Heart right ventricle (tissue), 16 donors: ENCODE measurements at regions of chr18 and their contacts with region 1.

Region 1: GRCh38 chr18:74196220-74197119 is 48.1 kb downstream of the TIMM21 start:
- DNase-seq: peak in 1 of 2 donors; percentile 25
- ATAC-seq: peak in 6 of 8 donors; percentile 58 to 79 (median 74)
- H3K4me3 ChIP-seq: peak overlapping the region in 5 of 10 donors; percentile 16 to 28 (median 24)
- H3K27ac ChIP-seq: no peak overlapping the region
- H3K4me1 ChIP-seq: peaks cover 0 to 4% (median 2%) of the 10 kb centered on the region in 9 donors
- H3K27me3 ChIP-seq: peaks cover 0 to 29% (median 8%) of the 10 kb centered on the region in 7 donors
- CTCF ChIP-seq: peak; percentile 80 to 95 (median 89)

Region 2: DNA sequence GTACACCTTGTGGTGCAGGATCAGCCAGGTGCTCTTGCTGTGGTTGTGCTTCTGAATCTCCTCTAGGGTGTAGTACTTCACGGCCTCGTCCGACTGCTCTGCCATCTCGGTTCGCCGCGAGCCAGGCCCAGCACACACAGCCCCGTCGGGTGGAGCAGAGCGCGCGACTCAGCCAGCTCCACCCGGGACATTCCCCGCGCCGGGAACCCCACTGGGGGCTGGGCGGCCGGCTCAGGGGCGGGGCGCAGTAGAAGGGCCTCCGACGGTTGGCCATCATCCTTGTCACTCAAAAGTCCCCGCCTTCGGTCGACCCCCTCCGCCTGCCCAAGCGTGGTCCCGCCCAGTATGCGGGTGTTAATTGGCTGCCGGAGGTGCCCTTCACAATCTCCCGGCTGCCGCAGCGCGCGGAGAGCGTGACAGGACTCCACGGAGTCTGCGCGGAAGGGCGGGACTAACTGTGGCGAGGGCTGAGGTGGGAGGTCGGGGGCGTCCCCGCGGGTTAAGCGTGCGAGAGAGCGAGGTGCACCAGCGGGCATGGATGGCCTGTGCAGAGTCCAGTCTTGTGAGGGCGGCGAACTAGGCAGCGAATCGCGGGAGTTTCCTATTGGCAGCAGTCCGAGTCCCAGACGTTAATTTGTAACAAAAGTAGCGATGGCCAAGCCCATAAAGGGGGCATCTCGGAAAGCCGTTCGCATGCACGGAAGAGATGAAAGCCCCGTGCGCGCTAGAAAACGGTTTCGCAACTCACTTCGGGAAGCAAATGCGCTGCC is 95.5 kb after region 1 on chr18 and contains the start of gene CYB5A:
- intact Hi-C with region 1: loop called in 1 of 10 experiments (anchors 2 kb)
- DNase-seq: peak; percentile 99
- ATAC-seq: peak; percentile 98 to 100 (median 99)
- H3K4me3 ChIP-seq: peak within 1 kb of the TSS; percentile 59 to 100 (median 92)
- H3K27ac ChIP-seq: peak within 1 kb of the TSS in 9 of 10 donors; percentile 51 to 89 (median 76)
- H3K4me1 ChIP-seq: peaks cover 3 to 39% (median 28%) of the 10 kb centered on the region in 9 donors
- H3K27me3 ChIP-seq: no peaks in the 10 kb centered on the region
- CTCF ChIP-seq: no peak
- total RNA-seq, gene CYB5A: 61.0 to 121 (median 78.0) TPM

Region 3: GRCh38 chr18:74316259-74317170 is 120.0 kb after region 1 on chr18:
- intact Hi-C with region 1: no loop called
- DNase-seq: no peak
- ATAC-seq: no peak
- H3K4me3 ChIP-seq: no peak overlapping the region
- H3K27ac ChIP-seq: peak overlapping the region in 1 of 10 donors; percentile 19
- H3K4me1 ChIP-seq: peaks cover 0 to 19% (median 2%) of the 10 kb centered on the region in 9 donors
- H3K27me3 ChIP-seq: peaks cover 0 to 2% (median 0%) of the 10 kb centered on the region in 7 donors
- CTCF ChIP-seq: no peak

Region 4: DNA sequence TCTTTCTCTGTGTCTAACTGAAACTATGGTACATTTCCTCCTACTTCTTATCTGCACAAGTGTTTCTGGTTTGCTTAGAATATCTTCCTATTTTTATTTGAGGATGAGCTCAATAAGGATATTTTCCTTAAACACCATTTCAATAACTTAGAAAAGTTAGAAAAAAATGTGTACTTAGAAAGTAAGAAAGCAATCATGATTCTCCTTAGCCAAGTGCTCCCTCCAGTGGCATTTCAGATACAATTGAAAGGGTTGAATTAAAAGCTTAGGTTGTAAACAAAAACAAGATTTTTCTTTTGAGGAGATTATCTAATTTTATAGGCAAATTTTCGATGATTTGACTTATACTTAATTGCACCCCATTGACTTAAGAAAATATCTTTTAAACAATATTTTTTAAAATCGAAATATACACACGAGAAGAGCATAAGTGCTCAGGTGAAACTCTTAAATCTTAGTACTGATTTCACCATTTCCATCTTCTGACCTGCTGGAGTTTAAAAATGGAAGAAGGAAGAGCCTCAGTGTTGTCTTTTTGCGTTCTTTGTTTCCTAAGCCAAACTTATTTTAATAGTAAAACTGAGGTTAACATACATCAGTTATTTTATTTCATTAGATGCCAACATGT is 146.1 kb after region 1 on chr18:
- intact Hi-C with region 1: loop called (anchors 1 to 5 kb)
- DNase-seq: peak in 1 of 2 donors; percentile 32
- ATAC-seq: no peak
- H3K4me3 ChIP-seq: no peak overlapping the region
- H3K27ac ChIP-seq: no peak overlapping the region
- H3K4me1 ChIP-seq: no peaks in the 10 kb centered on the region
- H3K27me3 ChIP-seq: peaks cover 0 to 11% (median 0%) of the 10 kb centered on the region in 7 donors
- CTCF ChIP-seq: peak; percentile 58 to 87 (median 75)

Region 5: DNA sequence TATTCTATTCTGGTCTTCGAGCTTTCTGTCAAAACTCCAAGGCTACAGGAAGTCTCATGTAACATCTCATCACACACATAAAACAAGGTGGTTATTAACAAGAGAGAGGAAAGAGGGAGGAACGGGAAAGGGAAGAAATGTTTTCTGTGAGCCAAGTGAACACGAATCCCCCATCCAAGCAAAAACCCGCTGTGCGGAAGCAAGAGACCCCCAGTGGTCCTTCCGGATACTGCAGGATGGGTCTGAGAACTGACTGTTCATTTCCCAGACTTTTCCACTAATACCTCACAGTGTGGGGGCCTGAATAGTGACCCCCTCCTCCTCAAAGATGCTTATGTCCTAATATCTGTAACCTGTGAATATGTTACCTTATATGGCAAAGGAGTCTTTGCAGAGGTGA is 279.7 kb after region 1 on chr18:
- intact Hi-C with region 1: loop called in 3 of 10 experiments (anchors 10 kb)
- DNase-seq: peak; percentile 42 to 65
- ATAC-seq: peak in 5 of 8 donors; percentile 33 to 76 (median 64)
- H3K4me3 ChIP-seq: no peak overlapping the region
- H3K27ac ChIP-seq: no peak overlapping the region
- H3K4me1 ChIP-seq: peaks cover 0 to 25% (median 4%) of the 10 kb centered on the region in 9 donors
- H3K27me3 ChIP-seq: no peaks in the 10 kb centered on the region
- CTCF ChIP-seq: peak; percentile 68 to 87 (median 80)

Region 6: DNA sequence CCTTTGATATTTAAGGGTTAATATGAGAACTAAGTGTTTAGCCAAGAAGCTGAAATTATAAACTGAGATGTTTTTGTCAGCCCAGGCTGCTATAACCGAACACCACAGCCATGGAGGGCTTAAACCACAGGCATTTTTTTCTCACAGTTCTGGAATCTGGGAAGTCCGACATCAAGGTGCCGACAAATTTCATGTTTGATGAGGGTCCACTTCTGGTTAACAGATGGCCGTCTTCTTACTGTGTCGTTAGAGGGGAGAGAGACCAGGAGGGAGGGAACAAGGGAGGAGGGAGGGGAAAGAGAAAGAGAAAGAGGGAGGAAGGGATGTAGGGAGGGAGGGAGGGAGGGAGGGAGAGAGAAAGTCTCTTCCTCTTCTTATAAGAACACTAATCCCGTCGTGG is 293.2 kb after region 1 on chr18:
- intact Hi-C with region 1: loop called in 6 of 10 experiments (anchors 5 to 10 kb)
- DNase-seq: no peak
- ATAC-seq: no peak
- H3K4me3 ChIP-seq: no peak overlapping the region
- H3K27ac ChIP-seq: no peak overlapping the region
- H3K4me1 ChIP-seq: peaks cover 5 to 27% (median 11%) of the 10 kb centered on the region in 9 donors
- H3K27me3 ChIP-seq: no peaks in the 10 kb centered on the region
- CTCF ChIP-seq: no peak

Region 7: GRCh38 chr18:74546751-74547550 is 350.5 kb after region 1 on chr18:
- intact Hi-C with region 1: loop called in 8 of 10 experiments (anchors 1 to 10 kb)
- DNase-seq: peak; percentile 39 to 75
- ATAC-seq: peak; percentile 59 to 84 (median 76)
- H3K4me3 ChIP-seq: no peak overlapping the region
- H3K27ac ChIP-seq: peak overlapping the region; percentile 67 to 93 (median 86)
- H3K4me1 ChIP-seq: peaks cover 7 to 60% (median 30%) of the 10 kb centered on the region in 9 donors
- H3K27me3 ChIP-seq: no peaks in the 10 kb centered on the region
- CTCF ChIP-seq: no peak

Region 8: GRCh38 chr18:74551936-74552555 is 355.6 kb after region 1 on chr18:
- intact Hi-C with region 1: loop called in 9 of 10 experiments (anchors 1 to 10 kb)
- DNase-seq: peak; percentile 70 to 89
- ATAC-seq: peak; percentile 86 to 95 (median 94)
- H3K4me3 ChIP-seq: no peak overlapping the region
- H3K27ac ChIP-seq: no peak overlapping the region
- H3K4me1 ChIP-seq: peaks cover 0 to 22% (median 15%) of the 10 kb centered on the region in 9 donors
- H3K27me3 ChIP-seq: no peaks in the 10 kb centered on the region
- CTCF ChIP-seq: peak; percentile 84 to 92 (median 88)